WTC11 (cell line): ENCODE measurements at regions of chr19 and their contacts with region 1.

Region 1: DNA sequence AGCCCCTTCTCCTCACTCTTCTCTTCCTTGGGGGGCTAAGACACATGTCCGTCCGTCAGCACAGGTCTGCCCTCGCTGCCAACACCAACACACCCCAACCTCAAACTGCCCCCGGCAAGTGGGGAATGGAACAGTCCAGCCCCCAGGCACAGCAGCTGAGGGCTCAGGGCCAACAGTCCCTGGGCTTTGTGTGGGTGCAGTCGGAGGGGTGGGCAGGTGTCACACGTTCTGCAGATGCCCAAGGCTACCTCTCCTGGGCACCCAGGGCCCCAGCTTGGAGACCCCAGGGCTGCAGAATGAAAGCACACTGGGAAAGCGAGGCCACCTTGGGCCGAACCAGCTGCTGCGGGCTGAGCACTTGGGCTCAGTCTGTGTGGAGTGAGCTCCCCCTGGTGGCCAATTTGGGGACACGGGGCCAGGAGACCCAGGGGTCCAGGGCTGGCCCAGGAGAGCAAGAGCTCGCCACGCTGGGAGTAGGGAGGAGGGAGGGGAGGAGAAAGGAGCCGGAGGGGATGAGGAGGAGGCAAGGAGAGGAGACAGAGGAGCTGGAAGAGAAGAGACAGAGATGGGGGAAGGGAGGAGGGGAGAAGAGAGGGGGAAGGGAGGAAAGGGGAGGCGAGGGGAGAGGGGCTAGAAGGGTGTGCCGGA is 14.0 kb upstream of the ATP8B3 start:
- DNase-seq: peak; percentile 93
- ATAC-seq: peak; percentile 81
- H3K4me3 Mint-ChIP-seq: no peak overlapping the region
- H3K27ac Mint-ChIP-seq: peak overlapping the region; percentile 92
- H3K4me1 Mint-ChIP-seq: peaks cover 6% of the 10 kb centered on the region; the same call in 1 of the 2 replicates
- H3K27me3 Mint-ChIP-seq: no peaks in the 10 kb centered on the region
- CTCF ChIP-seq: peak; percentile 85

Region 2: DNA sequence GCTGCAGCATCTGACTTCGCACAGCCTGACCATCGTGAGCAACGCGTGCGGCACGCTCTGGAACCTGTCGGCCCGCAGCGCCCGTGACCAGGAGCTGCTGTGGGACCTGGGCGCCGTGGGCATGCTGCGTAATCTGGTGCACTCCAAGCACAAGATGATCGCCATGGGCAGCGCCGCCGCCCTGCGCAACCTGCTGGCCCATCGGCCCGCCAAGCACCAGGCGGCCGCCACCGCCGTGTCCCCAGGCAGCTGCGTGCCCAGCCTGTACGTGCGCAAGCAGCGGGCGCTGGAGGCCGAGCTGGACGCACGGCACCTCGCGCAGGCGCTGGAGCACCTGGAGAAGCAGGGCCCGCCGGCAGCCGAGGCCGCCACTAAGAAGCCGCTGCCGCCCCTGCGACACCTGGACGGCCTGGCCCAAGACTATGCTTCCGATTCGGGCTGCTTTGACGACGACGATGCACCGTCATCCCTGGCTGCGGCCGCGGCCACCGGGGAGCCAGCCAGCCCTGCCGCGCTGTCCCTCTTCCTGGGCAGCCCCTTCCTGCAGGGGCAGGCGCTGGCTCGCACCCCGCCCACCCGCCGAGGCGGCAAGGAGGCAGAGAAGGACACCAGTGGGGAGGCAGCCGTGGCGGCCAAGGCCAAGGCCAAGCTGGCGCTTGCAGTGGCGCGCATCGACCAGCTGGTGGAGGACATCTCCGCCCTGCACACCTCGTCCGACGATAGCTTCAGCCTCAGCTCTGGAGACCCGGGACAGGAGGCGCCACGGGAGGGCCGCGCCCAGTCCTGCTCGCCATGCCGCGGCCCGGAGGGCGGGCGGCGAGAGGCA is 360.6 kb before region 1 on chr19:
- CTCF ChIA-PET with region 1: interaction called, 11 read pairs
- POLR2A ChIA-PET with region 1: no interaction called
- DNase-seq: peak; percentile 74
- ATAC-seq: peak; percentile 20
- H3K4me3 Mint-ChIP-seq: no peak overlapping the region
- H3K27ac Mint-ChIP-seq: no peak overlapping the region
- H3K4me1 Mint-ChIP-seq: peaks cover 2% of the 10 kb centered on the region; the same call in 1 of the 2 replicates
- H3K27me3 Mint-ChIP-seq: peaks cover 64% of the 10 kb centered on the region
- CTCF ChIP-seq: no peak

Region 3: DNA sequence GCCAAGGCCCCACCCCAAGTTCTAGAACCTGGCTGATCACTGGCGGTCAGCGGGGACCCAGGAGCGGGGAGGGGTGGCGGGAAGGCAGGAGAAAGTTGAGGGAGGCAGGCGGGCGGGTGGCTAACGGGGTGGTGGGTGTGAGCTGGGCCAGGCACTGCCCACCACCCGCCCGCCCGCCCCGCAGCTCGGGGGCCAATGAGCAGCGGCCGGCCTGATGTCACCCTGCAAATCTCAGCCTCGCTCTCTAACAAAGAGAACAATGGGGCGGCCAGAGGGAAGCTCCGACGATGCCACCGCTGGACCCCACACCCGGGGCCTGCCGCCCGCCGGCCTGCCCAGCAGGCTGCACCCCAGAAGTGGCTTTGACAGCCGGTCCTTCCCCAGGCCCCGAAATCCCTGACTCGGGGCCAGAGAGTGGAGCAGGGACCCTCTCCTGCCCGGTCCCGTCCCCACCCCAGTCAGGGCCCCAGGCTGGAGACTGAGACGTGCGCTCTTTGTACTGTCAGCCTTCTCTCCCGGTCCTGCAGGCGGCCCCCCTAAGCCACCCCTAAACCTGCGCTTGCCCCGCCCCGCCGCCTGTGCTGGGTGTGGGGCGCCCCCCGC is 259.4 kb before region 1 on chr19:
- CTCF ChIA-PET with region 1: interaction called, 13 read pairs
- POLR2A ChIA-PET with region 1: interaction called, 3 read pairs
- DNase-seq: peak; percentile 74
- ATAC-seq: peak; percentile 84
- H3K4me3 Mint-ChIP-seq: peak overlapping the region; percentile 54
- H3K27ac Mint-ChIP-seq: no peak overlapping the region
- H3K4me1 Mint-ChIP-seq: peaks cover 6% of the 10 kb centered on the region
- H3K27me3 Mint-ChIP-seq: peaks cover 33% of the 10 kb centered on the region
- CTCF ChIP-seq: no peak

Region 4: GRCh38 chr19:1734321-1734966 is 91.6 kb before region 1 on chr19:
- CTCF ChIA-PET with region 1: no interaction called
- POLR2A ChIA-PET with region 1: no interaction called
- DNase-seq: no peak
- ATAC-seq: no peak
- H3K4me3 Mint-ChIP-seq: no peak overlapping the region
- H3K27ac Mint-ChIP-seq: no peak overlapping the region
- H3K4me1 Mint-ChIP-seq: no peaks in the 10 kb centered on the region
- H3K27me3 Mint-ChIP-seq: peaks cover 70% of the 10 kb centered on the region
- CTCF ChIP-seq: no peak

Region 5: DNA sequence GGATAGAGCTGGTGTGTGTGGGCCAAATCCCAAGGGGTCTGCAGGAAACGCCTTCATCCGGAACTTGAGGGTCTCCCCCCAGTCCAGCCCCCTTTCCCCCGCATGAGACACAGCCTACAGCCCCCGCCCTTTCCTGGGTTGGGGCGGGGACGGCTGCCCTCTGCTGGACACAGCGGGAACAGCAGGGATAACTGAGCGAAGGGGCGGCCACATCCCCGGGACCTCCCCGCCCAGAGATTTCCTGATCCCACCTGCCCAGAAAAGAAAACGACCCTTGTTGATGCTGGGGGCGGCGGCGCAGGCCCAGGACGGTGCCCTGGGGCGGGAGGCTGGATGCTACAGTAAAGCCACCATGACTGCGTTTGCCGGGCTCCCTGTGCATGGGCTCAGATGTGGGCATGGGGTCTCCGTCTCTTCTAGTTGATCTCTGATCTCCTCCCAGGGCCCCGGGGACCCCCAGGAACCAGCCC is 58.5 kb before region 1 on chr19:
- CTCF ChIA-PET with region 1: interaction called, 75 read pairs
- POLR2A ChIA-PET with region 1: interaction called, 3 read pairs
- DNase-seq: peak; percentile 79
- ATAC-seq: peak; percentile 59
- H3K4me3 Mint-ChIP-seq: no peak overlapping the region
- H3K27ac Mint-ChIP-seq: no peak overlapping the region
- H3K4me1 Mint-ChIP-seq: peaks cover 11% of the 10 kb centered on the region
- H3K27me3 Mint-ChIP-seq: peaks cover 99% of the 10 kb centered on the region
- CTCF ChIP-seq: peak; percentile 96

Region 6: DNA sequence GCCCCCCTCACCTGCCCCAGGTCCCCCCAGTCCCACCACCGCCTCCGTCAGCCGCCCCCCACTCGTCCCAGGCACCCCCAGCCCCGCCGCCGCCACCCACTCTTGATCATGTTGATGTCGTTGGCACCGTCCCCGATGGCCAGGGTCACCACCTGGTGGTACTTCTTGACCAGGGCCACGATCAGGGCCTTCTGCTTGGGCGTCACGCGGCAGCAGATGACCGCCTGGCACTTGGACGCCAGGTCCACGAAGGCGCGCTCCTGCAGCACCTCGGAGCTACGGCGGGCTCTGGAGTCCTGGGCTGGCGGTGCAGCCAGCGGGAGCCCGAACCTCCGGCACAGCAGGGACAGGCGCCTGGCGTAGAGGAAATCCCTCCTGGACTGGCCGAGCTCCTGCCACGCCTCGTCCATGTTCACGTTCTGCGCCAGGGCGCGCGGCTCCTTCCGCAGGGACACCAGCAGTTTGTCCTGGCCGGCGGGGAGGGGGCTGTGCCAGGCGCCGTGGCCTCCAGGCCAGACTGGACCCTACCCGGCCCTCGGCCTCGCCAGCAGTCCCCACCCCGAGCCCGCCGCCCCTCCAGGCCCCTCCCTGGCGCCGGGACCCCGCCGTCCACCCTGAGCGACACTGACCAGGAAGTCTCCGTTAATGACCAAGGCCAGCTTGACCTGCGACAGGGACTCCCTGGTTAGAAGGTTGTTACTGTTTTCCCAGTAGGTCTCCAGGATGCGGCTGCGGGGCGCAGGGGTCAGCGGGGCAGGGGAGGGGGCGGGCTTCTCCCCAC is 36.6 kb before region 1 on chr19:
- CTCF ChIA-PET with region 1: interaction called, 86 read pairs
- POLR2A ChIA-PET with region 1: interaction called, 3 read pairs
- DNase-seq: no peak
- ATAC-seq: no peak
- H3K4me3 Mint-ChIP-seq: peak overlapping the region; percentile 48; the same call in 1 of the 2 replicates
- H3K27ac Mint-ChIP-seq: no peak overlapping the region
- H3K4me1 Mint-ChIP-seq: peaks cover 5% of the 10 kb centered on the region
- H3K27me3 Mint-ChIP-seq: peaks cover 29% of the 10 kb centered on the region
- CTCF ChIP-seq: no peak

Region 7: GRCh38 chr19:1837625-1838105 is 11.6 kb after region 1 on chr19:
- CTCF ChIA-PET with region 1: interaction called, 216 read pairs
- POLR2A ChIA-PET with region 1: interaction called, 8 read pairs
- DNase-seq: peak; percentile 88
- ATAC-seq: peak; percentile 78
- H3K4me3 Mint-ChIP-seq: no peak overlapping the region
- H3K27ac Mint-ChIP-seq: no peak overlapping the region; the same call in 1 of the 2 replicates
- H3K4me1 Mint-ChIP-seq: 0 out of 2 replicates have a peak, but pooled peaks cover 6% of the 10 kb centered on the region
- H3K27me3 Mint-ChIP-seq: no peaks in the 10 kb centered on the region
- CTCF ChIP-seq: peak; percentile 94

Region 8: GRCh38 chr19:1863726-1864480 is 37.9 kb after region 1 on chr19:
- CTCF ChIA-PET with region 1: interaction called, 57 read pairs
- POLR2A ChIA-PET with region 1: no interaction called
- DNase-seq: peak; percentile 94
- ATAC-seq: peak; percentile 68
- H3K4me3 Mint-ChIP-seq: peak overlapping the region; percentile 68
- H3K27ac Mint-ChIP-seq: no peak overlapping the region
- H3K4me1 Mint-ChIP-seq: peaks cover 18% of the 10 kb centered on the region
- H3K27me3 Mint-ChIP-seq: peaks cover 11% of the 10 kb centered on the region
- CTCF ChIP-seq: no peak

Region 9: DNA sequence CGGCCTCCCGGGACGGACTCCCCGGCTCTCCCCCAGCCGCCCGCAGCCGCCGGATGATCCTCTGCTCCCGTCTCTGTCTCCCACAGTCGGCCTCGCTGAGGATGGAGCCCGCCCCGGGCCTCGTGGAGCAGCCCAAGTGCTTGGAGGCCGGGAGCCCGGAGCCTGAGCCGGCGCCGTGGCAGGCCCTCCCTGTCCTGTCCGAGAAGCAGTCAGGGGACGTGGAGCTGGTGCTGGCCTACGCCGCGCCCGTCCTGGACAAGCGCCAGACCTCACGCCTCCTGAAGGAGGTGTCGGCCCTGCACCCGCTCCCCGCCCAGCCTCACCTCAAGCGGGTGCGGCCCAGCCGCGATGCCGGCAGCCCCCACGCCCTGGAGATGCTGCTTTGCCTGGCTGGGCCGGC is 86.0 kb after region 1 on chr19:
- CTCF ChIA-PET with region 1: no interaction called
- POLR2A ChIA-PET with region 1: no interaction called
- DNase-seq: no peak
- ATAC-seq: no peak
- H3K4me3 Mint-ChIP-seq: no peak overlapping the region
- H3K27ac Mint-ChIP-seq: no peak overlapping the region
- H3K4me1 Mint-ChIP-seq: no peaks in the 10 kb centered on the region
- H3K27me3 Mint-ChIP-seq: no peaks in the 10 kb centered on the region
- CTCF ChIP-seq: no peak